Natural killer cell (primary cell): ENCODE measurements at regions of chr9 and their contacts with region 1.

Region 1: DNA sequence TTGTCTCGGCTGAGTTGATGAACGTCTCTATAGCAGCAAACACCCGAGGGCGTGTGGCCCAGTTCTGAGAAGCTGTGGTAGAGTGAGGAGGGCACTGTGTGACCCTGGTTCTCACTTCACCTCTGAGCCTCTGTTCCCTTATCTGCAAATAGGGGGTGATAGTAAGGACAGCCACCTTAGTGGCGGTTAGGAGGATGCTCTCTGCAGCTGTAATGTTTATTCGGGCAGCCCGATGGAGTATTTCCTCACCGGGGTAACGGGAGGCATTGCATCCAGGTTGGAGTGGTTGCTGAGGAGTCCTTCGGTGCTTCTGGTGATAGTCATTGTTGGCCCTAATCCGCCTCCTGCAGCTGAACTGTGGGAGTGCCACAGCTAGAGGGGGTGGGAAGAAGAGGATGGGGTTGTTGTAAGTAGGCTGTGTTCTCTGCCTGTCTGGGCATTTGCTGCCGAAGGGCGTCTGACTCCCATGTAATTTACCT is 13.9 kb downstream of the PRRC2B start:
- DNase-seq: peak; percentile 62 to 82
- ATAC-seq: peak; percentile 65 to 85 (median 82)
- H3K4me3 ChIP-seq: peak overlapping the region; percentile 26
- H3K4me3 Mint-ChIP-seq: peak overlapping the region; percentile 82
- H3K27ac ChIP-seq: peak overlapping the region; percentile 92
- H3K27ac Mint-ChIP-seq: peak overlapping the region; percentile 91 to 96
- H3K4me1 ChIP-seq: peaks cover 84% of the 10 kb centered on the region
- H3K4me1 Mint-ChIP-seq: peaks cover 68 to 73% of the 10 kb centered on the region in 2 donors
- H3K27me3 ChIP-seq: no peaks in the 10 kb centered on the region
- H3K27me3 Mint-ChIP-seq: no peaks in the 10 kb centered on the region
- CTCF ChIP-seq: peak; percentile 44

Region 2: DNA sequence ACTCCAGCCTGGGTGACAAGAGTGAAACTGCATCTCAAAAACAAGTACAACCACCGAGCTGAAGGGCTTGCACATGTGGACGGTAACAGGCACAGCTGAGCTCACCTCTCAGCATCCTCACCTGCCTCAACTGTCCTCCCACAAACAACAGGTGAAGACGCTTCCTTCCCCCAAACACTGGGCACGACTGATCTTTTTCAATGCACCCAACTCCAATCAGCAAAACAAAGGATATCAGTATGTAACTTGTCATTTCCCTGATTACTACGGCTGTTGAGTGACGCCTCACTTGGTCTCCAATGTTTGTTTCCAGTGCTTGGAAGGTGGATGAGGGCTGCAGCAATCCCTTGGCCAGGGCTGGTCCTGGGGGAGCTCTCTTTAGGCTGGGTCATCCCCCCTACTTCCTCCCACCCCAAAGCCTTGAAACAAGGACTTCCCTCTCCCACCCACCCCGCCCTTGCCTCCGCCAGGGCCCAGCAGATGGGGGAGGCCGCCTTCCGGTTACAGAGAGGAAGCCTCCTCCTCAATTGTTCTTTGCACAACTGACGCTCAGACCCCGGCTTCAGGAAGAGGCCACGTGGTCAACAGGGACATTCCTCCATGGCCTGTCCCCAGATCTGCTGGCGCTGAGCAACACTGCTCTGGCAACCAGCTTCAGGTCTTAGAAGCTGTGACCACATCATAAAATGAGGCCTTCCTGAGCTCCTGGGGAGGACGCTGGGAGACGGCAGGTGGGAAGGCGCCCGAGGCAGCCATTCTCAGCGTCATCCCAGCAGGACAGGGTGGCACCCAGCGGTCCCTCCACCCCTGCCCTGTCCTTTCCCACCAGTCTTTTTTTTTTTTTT is 137.4 kb before region 1 on chr9:
- intact Hi-C with region 1: loop called (anchors 5 kb)
- DNase-seq: peak in 1 of 2 donors; percentile 76
- ATAC-seq: peak; percentile 2 to 37 (median 8)
- H3K4me3 ChIP-seq: peak overlapping the region; percentile 19
- H3K4me3 Mint-ChIP-seq: peak overlapping the region; percentile 99
- H3K27ac ChIP-seq: peak overlapping the region; percentile 87
- H3K27ac Mint-ChIP-seq: peak overlapping the region; percentile 91 to 95
- H3K4me1 ChIP-seq: peaks cover 92% of the 10 kb centered on the region
- H3K4me1 Mint-ChIP-seq: peaks cover 70 to 79% of the 10 kb centered on the region in 2 donors
- H3K27me3 ChIP-seq: no peaks in the 10 kb centered on the region
- H3K27me3 Mint-ChIP-seq: no peaks in the 10 kb centered on the region
- CTCF ChIP-seq: no peak

Region 3: DNA sequence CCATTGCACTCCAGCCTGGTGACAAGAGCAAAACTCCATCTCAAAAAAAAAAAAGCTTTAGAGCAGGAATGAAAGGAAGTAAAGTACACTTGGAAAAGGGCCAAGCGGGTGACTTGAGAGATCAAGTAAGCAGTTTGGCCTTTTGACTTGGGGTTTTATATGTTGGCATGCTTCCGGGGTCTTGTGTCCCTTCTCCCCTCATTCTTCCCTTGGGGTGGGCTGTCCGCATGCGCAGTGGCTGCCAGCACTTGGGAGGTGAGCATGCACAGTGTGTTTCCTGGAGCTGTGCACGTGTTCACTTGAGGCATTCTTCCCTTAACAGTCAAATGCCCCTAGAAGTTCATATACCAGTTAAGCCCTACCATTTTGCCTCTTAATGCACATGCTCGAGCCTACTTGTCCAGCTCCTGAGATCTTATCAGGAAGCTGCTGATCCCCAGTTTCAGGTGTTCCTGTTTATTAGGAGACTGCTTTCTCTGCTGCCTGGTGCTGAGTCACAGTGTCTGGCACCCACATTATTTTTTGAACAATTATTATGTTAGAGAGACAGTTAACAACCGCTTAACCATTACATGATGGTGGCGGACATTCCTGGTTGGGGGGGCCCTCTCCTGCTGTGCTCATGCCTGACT is 46.4 kb before region 1 on chr9:
- intact Hi-C with region 1: no loop called
- DNase-seq: peak in 1 of 2 donors; percentile 49
- ATAC-seq: no peak
- H3K4me3 ChIP-seq: no peak overlapping the region
- H3K4me3 Mint-ChIP-seq: no peak overlapping the region
- H3K27ac ChIP-seq: no peak overlapping the region
- H3K27ac Mint-ChIP-seq: no peak overlapping the region
- H3K4me1 ChIP-seq: peaks cover 3% of the 10 kb centered on the region
- H3K4me1 Mint-ChIP-seq: peaks cover 0 to 8% of the 10 kb centered on the region in 2 donors
- H3K27me3 ChIP-seq: no peaks in the 10 kb centered on the region
- H3K27me3 Mint-ChIP-seq: no peaks in the 10 kb centered on the region
- CTCF ChIP-seq: no peak

Region 4: DNA sequence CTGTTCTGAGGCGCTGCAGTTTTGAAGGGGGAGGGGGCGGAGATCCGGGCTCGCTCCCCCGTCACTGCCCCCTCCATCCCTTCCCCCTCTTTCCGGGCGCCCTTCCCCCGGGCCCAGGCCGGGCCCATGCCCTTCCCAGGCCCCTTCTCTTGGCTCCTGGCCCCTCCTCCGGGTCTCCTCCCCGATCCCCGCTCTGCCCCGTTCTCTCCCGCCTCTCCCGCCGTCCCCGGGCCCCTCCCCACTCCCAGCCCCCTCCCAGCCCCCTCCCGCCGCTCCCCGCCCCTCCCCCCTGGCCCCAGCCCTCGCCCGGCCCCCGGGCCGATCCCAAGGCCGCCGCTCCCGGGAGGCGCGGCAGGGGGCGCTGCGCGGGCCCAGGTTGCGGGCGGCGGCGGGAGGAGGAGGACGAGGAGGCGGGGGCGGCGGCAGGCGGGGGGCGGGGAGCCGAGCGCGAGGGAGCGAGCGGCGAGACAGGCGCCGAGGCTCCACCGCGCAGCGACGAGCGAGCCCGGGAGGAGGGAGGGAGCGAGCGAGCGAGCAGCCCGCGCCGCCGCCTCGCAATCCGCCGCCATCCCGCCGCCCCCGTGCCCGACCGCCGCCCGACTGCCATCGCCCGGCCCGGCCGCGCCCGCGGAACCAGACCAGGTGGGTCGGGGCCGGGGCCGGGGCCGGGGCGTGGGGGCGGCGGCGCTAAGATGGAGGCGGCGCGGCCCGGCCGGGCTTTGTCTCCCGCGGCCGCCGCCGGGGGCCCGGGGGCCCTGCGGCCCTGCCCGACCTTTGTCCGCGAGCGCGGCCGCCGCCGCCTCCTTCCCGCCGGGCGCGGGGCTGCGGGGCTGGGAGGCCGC is 13.9 kb before region 1 on chr9 and contains the start of gene PRRC2B:
- intact Hi-C with region 1: loop called (anchors 1 kb)
- DNase-seq: peak; percentile 78 to 93
- ATAC-seq: peak; percentile 65 to 81 (median 70)
- H3K4me3 ChIP-seq: peak within 1 kb of the TSS; percentile 41
- H3K4me3 Mint-ChIP-seq: peak within 1 kb of the TSS; percentile 92
- H3K27ac ChIP-seq: peak within 1 kb of the TSS; percentile 72
- H3K27ac Mint-ChIP-seq: peak within 1 kb of the TSS; percentile 92 to 93
- H3K4me1 ChIP-seq: peaks cover 46% of the 10 kb centered on the region
- H3K4me1 Mint-ChIP-seq: peaks cover 41 to 47% of the 10 kb centered on the region in 2 donors
- H3K27me3 ChIP-seq: no peaks in the 10 kb centered on the region
- H3K27me3 Mint-ChIP-seq: no peaks in the 10 kb centered on the region
- CTCF ChIP-seq: peak; percentile 52
- total RNA-seq, gene PRRC2B: 249 to 275 (median 274) TPM

Region 5: GRCh38 chr9:131441441-131441840 is 33.7 kb after region 1 on chr9:
- intact Hi-C with region 1: loop called (anchors 1 kb)
- DNase-seq: peak; percentile 23 to 40
- ATAC-seq: peak; percentile 89 to 95 (median 91)
- H3K4me3 ChIP-seq: no peak overlapping the region
- H3K4me3 Mint-ChIP-seq: peak overlapping the region; percentile 28
- H3K27ac ChIP-seq: peak overlapping the region; percentile 46
- H3K27ac Mint-ChIP-seq: peak overlapping the region; percentile 71 to 84
- H3K4me1 ChIP-seq: peaks cover 14% of the 10 kb centered on the region
- H3K4me1 Mint-ChIP-seq: peaks cover 26 to 37% of the 10 kb centered on the region in 2 donors
- H3K27me3 ChIP-seq: no peaks in the 10 kb centered on the region
- H3K27me3 Mint-ChIP-seq: no peaks in the 10 kb centered on the region
- CTCF ChIP-seq: no peak

Region 6: GRCh38 chr9:131733541-131734061 is 325.8 kb after region 1 on chr9:
- intact Hi-C with region 1: loop called (anchors 5 kb)
- DNase-seq: peak; percentile 52 to 75
- ATAC-seq: peak in 2 of 3 donors; percentile 6 to 21
- H3K4me3 ChIP-seq: peak overlapping the region; percentile 4
- H3K4me3 Mint-ChIP-seq: peak overlapping the region; percentile 82
- H3K27ac ChIP-seq: peak overlapping the region; percentile 93
- H3K27ac Mint-ChIP-seq: peak overlapping the region; percentile 92 to 95
- H3K4me1 ChIP-seq: peaks cover 99% of the 10 kb centered on the region
- H3K4me1 Mint-ChIP-seq: peaks cover 84 to 87% of the 10 kb centered on the region in 2 donors
- H3K27me3 ChIP-seq: no peaks in the 10 kb centered on the region
- H3K27me3 Mint-ChIP-seq: no peaks in the 10 kb centered on the region
- CTCF ChIP-seq: no peak

Region 7: DNA sequence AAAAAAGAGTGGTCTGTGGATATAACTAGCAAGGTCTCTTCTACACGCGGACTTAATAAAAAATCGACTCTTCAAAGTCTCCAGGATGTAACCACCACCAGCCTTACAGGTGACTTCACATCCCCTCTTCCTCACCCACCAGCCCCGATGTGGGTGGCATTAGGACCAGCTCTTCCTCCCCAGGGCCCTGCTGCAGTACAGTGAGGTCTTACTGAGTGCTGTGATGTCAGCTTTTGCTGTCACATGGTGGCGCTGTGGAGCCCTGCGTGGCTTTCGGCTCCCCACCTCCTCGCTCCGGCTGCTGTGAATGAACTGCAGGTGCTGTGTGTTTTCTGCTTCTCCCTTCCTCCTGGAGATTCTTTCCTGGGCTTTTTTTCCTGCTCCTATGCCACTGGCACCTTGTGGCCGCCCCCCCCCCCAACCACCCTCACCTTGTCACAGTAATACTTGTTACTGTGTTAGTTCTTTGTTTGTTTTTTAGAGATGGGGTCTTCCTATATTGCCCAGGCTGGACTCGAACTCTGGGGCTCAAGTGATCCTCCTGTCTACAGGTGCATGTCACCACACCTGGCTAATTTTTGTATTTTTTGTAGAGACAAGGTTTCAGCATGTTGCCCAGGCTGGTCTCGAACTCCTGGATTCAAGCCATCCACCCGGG is 347.9 kb after region 1 on chr9:
- intact Hi-C with region 1: no loop called
- DNase-seq: peak; percentile 82 to 94
- ATAC-seq: peak; percentile 98 to 100 (median 100)
- H3K4me3 ChIP-seq: no peak overlapping the region
- H3K4me3 Mint-ChIP-seq: no peak overlapping the region
- H3K27ac ChIP-seq: no peak overlapping the region
- H3K27ac Mint-ChIP-seq: no peak overlapping the region
- H3K4me1 ChIP-seq: peaks cover 8% of the 10 kb centered on the region
- H3K4me1 Mint-ChIP-seq: peaks cover 5 to 6% of the 10 kb centered on the region in 2 donors
- H3K27me3 ChIP-seq: peaks cover 6% of the 10 kb centered on the region
- H3K27me3 Mint-ChIP-seq: peaks cover 6 to 16% of the 10 kb centered on the region in 2 donors
- CTCF ChIP-seq: peak; percentile 84